Heart right ventricle (tissue), 16 donors: ENCODE measurements at regions of chr17 and their contacts with region 1.

Region 1: DNA sequence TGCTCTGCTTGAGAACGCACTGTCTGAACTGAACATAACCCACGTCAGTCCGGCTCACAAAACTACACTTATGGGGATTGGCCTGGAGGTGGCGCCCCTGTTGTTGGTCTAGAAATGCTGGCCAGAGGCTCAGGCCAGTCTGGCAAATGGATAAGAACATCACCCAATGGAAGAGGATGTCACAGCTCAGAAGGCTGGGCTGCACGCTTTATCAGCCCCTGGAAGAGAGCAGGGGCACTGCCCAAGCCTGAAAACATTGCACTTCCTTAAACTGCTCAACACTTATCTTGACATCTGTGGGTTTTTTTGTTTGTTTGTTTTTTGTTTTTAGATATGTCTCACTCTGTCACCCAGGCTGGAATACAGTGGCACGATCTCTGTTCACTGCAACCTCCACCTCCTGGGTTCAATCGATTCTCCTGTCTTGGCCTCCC is 24.8 kb upstream of the BPTF start:
- DNase-seq: peak; percentile 69 to 77
- ATAC-seq: peak; percentile 75 to 94 (median 88)
- H3K4me3 ChIP-seq: no peak overlapping the region
- H3K27ac ChIP-seq: no peak overlapping the region
- H3K4me1 ChIP-seq: peaks cover 0 to 11% (median 0%) of the 10 kb centered on the region in 9 donors
- H3K27me3 ChIP-seq: no peaks in the 10 kb centered on the region
- CTCF ChIP-seq: peak; percentile 32 to 77 (median 65)

Region 2: GRCh38 chr17:67824735-67825626 is 24.5 kb after region 1 on chr17 and contains the start of gene BPTF:
- intact Hi-C with region 1: loop called in 1 of 10 experiments (anchors 1 kb)
- DNase-seq: peak; percentile 92 to 93
- ATAC-seq: peak; percentile 96 to 98 (median 98)
- H3K4me3 ChIP-seq: peak within 1 kb of the TSS; percentile 55 to 92 (median 80)
- H3K27ac ChIP-seq: peak within 1 kb of the TSS; percentile 89 to 98 (median 96)
- H3K4me1 ChIP-seq: peaks cover 0 to 39% (median 39%) of the 10 kb centered on the region in 9 donors
- H3K27me3 ChIP-seq: no peaks in the 10 kb centered on the region
- CTCF ChIP-seq: peak; percentile 86 to 99 (median 96)
- total RNA-seq, gene BPTF: 56.7 to 102 (median 86.6) TPM

Region 3: GRCh38 chr17:67912656-67913055 is 112.1 kb after region 1 on chr17:
- intact Hi-C with region 1: loop called in 1 of 10 experiments (anchors 10 kb)
- DNase-seq: no peak
- ATAC-seq: no peak
- H3K4me3 ChIP-seq: no peak overlapping the region
- H3K27ac ChIP-seq: no peak overlapping the region
- H3K4me1 ChIP-seq: peaks cover 0 to 25% (median 11%) of the 10 kb centered on the region in 9 donors
- H3K27me3 ChIP-seq: no peaks in the 10 kb centered on the region
- CTCF ChIP-seq: no peak